ENCODE measurements at regions of chr10 and their contacts with region 1.

Region 1: DNA sequence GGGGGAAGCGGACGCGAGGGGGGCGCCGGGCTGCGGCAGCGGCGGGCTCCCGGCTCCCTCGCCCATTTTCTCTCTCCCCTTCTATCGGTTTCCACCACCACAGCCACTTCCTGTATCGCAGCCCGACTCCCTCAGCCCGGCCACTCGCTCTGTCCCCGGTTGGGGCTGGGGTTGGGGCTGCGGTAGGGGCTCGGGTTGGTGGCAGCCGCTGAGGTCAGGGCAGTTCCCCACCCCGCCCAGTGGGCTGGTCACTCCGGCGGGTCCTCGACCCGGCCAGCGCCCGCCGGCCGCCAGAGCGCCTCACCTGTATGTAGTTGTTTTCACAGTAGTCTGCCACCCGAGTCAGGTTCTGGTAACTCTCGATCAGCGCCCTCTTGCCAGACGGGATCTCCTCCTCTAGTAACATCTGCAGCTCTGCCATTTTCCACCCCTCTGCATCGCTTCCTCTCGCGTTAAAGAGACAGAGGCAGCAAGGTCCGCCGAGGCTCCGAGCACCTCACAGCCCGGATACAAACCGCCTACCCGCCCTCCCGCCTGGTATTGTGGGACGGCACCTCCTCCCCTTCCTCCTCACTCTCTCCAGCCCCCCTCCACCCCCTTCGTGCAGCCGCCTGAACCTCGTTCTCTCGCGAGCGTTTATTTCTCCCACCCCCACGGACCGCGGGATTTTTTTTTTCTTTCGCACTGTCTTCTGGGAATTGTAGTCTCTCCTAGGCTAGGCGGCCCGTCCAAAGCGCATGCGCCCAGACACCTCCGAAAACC is at the start of gene ABI1:
- DNase-seq: peak; percentile 97 to 98
- ATAC-seq: peak; percentile 97 to 99 (median 98)
- H3K4me3 ChIP-seq: peak within 1 kb of the TSS; percentile 90 to 99 (median 94)
- H3K27ac ChIP-seq: peak within 1 kb of the TSS; percentile 91 to 100 (median 98)
- H3K4me1 ChIP-seq: peaks cover 3 to 53% (median 31%) of the 10 kb centered on the region in 9 donors
- H3K27me3 ChIP-seq: peaks cover 0 to 4% (median 0%) of the 10 kb centered on the region in 7 donors
- CTCF ChIP-seq: no peak
- total RNA-seq, gene ABI1: 24.2 to 39.3 (median 28.9) TPM

Region 2: DNA sequence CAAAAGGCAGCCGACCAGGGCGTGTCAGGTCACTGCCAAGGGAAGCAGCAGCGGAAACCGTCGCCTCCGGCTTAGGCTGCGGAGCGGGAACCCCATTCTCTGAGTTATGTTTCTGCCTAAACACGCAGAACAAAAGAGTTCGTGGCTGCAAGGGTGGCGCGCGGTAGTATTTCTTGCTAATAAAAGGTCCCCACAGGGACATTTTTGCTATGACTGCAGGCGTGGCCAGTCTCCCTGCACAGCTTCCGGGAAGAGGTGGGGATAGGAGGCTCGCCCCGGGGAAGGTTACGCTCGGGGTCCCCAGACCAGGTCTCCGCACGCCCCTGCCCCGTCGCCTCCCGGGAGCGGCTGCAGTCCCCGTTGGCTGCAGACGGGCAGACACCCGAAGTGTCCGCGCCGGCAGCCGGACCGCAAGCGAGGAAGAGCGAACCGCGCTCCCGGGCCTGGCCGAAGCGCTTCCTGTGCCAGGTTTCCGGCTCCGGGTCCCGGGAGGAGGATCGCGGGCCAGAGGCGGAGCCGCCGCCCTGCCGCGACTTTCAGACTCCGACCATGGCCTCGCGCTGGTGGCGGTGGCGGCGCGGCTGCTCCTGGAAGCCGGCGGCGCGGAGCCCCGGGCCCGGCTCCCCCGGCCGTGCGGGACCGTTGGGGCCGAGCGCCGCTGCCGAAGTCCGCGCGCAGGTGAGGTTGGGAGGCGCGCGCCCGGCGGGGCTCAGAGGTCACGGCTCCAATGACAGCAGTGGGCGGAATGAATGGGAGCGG is 163.3 kb before region 1 on chr10 and contains the start of gene PDSS1:
- intact Hi-C with region 1: loop called in 1 of 10 experiments (anchors 10 kb)
- DNase-seq: peak; percentile 65 to 76
- ATAC-seq: peak; percentile 93 to 97 (median 96)
- H3K4me3 ChIP-seq: peak within 1 kb of the TSS; percentile 75 to 97 (median 86)
- H3K27ac ChIP-seq: peak within 1 kb of the TSS; percentile 93 to 99 (median 97)
- H3K4me1 ChIP-seq: peaks cover 0 to 19% (median 16%) of the 10 kb centered on the region in 9 donors
- H3K27me3 ChIP-seq: peaks cover 0 to 12% (median 6%) of the 10 kb centered on the region in 7 donors
- CTCF ChIP-seq: no peak
- total RNA-seq, gene PDSS1: 3.7 to 7.2 (median 5.3) TPM

Region 3: DNA sequence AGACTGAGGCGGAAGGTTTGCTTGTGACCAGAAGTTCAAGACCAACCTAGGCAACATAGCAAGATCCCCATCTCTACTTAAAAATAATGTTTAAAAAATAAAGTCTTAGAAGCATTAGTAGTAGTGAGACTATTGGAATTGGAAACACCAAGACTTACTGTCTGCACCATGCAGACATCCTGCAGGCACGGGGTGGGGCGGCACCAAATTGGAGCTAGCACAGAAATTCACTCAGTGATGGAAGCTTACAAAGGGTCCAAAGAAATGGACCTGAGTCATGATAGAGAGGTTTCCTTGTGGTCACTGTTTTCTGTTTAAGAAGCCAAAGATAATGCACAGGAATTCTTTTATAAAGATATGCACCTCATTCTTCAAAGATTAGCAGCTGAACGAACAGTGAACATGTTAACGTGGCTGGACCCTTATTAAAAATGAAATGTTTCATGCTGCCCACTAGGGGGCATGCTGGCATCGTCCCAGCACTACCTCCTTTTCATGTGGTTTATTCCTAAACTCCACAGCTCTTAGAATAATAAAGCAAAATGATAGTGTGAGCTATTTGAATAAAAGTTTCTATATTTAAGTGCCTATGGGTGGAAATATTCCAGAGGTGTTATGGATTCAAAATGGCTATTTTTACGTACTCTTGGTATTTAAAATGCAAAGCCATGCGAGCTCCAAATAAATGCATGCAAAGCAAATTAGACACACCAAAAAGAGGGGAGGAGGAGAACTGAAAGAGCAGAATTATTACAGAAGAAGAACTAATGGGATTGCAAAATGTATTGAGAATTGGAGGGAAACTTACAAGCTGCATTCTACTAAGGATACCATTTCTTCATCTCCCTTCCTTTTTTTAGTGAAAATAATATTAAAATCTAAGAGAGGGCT is 134.5 kb before region 1 on chr10:
- intact Hi-C with region 1: loop called in 4 of 10 experiments (anchors 2 to 5 kb)
- DNase-seq: peak; percentile 45 to 68
- ATAC-seq: peak in 5 of 8 donors; percentile 59 to 74 (median 67)
- H3K4me3 ChIP-seq: no peak overlapping the region
- H3K27ac ChIP-seq: no peak overlapping the region
- H3K4me1 ChIP-seq: peaks cover 0 to 6% (median 0%) of the 10 kb centered on the region in 9 donors
- H3K27me3 ChIP-seq: no peaks in the 10 kb centered on the region
- CTCF ChIP-seq: peak; percentile 64 to 89 (median 82)

Region 4: GRCh38 chr10:26743091-26743490 is 117.5 kb before region 1 on chr10:
- intact Hi-C with region 1: loop called in 1 of 10 experiments (anchors 5 kb)
- DNase-seq: no peak
- ATAC-seq: no peak
- H3K4me3 ChIP-seq: no peak overlapping the region
- H3K27ac ChIP-seq: no peak overlapping the region
- H3K4me1 ChIP-seq: peaks cover 0 to 14% (median 0%) of the 10 kb centered on the region in 9 donors
- H3K27me3 ChIP-seq: no peaks in the 10 kb centered on the region
- CTCF ChIP-seq: no peak

Region 5: GRCh38 chr10:26804418-26805393 is 55.9 kb before region 1 on chr10:
- intact Hi-C with region 1: loop called in 1 of 10 experiments (anchors 5 kb)
- DNase-seq: no peak
- ATAC-seq: no peak
- H3K4me3 ChIP-seq: no peak overlapping the region
- H3K27ac ChIP-seq: peak overlapping the region in 1 of 10 donors; percentile 19
- H3K4me1 ChIP-seq: peaks cover 8 to 56% (median 35%) of the 10 kb centered on the region in 9 donors
- H3K27me3 ChIP-seq: no peaks in the 10 kb centered on the region
- CTCF ChIP-seq: no peak

Region 6: GRCh38 chr10:26909746-26910145 is 49.1 kb after region 1 on chr10:
- intact Hi-C with region 1: no loop called
- DNase-seq: no peak
- ATAC-seq: no peak
- H3K4me3 ChIP-seq: no peak overlapping the region
- H3K27ac ChIP-seq: no peak overlapping the region
- H3K4me1 ChIP-seq: no peaks in the 10 kb centered on the region
- H3K27me3 ChIP-seq: no peaks in the 10 kb centered on the region
- CTCF ChIP-seq: no peak

Region 7: GRCh38 chr10:27155066-27155754 is 294.6 kb after region 1 on chr10 and contains the start of gene MASTL:
- intact Hi-C with region 1: no loop called
- DNase-seq: peak; percentile 92 to 93
- ATAC-seq: peak; percentile 96 to 98 (median 97)
- H3K4me3 ChIP-seq: peak within 1 kb of the TSS; percentile 48 to 95 (median 84)
- H3K27ac ChIP-seq: peak within 1 kb of the TSS; percentile 93 to 100 (median 98)
- H3K4me1 ChIP-seq: peaks cover 2 to 50% (median 36%) of the 10 kb centered on the region in 9 donors
- H3K27me3 ChIP-seq: no peaks in the 10 kb centered on the region
- CTCF ChIP-seq: no peak
- total RNA-seq, gene MASTL: 1.6 to 4.3 (median 2.0) TPM

Measured in heart right ventricle (tissue), 16 donors.